Gastrocnemius medialis (tissue), 4 donors: ENCODE measurements at regions of chr6 and their contacts with region 1.

Region 1: DNA sequence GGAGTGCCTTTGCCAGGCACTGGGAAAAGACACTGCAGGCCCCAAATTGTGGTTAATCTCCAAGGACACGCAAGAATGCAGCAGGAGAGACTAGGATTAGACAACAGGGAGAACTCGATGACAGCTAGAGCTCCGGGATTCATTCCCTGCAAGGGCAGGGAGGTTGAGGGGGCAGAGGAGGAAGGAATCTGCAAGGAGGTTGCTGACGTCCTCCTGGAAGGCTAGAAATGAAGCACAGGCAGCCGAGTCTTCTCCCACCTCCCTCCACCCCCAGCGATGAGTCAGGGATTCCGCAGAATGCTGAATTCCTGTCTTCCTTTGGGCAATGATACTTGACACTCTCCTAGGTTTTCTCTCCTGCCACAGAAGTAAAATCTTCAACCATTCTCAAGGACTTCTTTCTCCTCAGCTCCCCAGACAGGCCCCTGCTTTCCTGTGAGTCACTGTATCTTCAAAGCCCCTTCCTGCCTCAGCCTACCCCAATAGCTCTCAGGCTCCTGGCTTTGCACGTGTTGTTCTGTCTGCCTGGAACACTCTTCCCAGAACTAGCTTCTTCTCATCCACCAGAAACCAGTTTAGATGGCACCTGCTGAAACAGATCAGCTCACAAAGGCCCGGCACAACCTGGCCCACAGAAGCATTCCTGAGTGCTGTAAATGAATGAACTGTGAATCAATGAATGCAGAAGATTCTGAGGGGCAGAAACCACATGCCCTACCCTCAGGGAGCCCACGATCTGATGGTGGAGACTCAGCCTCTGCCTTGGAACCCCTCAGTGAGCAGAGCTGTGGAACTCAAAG is 85.6 kb downstream of the MRPL14 start:
- DNase-seq: no peak
- ATAC-seq: peak in 1 of 2 donors; percentile 19
- H3K4me3 ChIP-seq: no peak overlapping the region
- H3K27ac ChIP-seq: no peak overlapping the region
- H3K4me1 ChIP-seq: peaks cover 8 to 20% of the 10 kb centered on the region in 2 donors
- H3K27me3 ChIP-seq: no peaks in the 10 kb centered on the region
- CTCF ChIP-seq: no peak
- POLR2A ChIP-seq: no peak

Region 2: GRCh38 chr6:43856005-43856765 is 185.5 kb before region 1 on chr6:
- in situ Hi-C with region 1: no loop called
- intact Hi-C with region 1: loop called (anchors 10 kb)
- DNase-seq: peak; percentile 20 to 66
- ATAC-seq: peak; percentile 63 to 92
- H3K4me3 ChIP-seq: no peak overlapping the region
- H3K27ac ChIP-seq: peak overlapping the region; percentile 6 to 49 (median 23)
- H3K4me1 ChIP-seq: no peaks in the 10 kb centered on the region
- H3K27me3 ChIP-seq: no peaks in the 10 kb centered on the region
- CTCF ChIP-seq: peak; percentile 47 to 73 (median 65)
- POLR2A ChIP-seq: no peak